BJ (cell line): ENCODE measurements at regions of chr5 and their contacts with region 1.

Region 1: DNA sequence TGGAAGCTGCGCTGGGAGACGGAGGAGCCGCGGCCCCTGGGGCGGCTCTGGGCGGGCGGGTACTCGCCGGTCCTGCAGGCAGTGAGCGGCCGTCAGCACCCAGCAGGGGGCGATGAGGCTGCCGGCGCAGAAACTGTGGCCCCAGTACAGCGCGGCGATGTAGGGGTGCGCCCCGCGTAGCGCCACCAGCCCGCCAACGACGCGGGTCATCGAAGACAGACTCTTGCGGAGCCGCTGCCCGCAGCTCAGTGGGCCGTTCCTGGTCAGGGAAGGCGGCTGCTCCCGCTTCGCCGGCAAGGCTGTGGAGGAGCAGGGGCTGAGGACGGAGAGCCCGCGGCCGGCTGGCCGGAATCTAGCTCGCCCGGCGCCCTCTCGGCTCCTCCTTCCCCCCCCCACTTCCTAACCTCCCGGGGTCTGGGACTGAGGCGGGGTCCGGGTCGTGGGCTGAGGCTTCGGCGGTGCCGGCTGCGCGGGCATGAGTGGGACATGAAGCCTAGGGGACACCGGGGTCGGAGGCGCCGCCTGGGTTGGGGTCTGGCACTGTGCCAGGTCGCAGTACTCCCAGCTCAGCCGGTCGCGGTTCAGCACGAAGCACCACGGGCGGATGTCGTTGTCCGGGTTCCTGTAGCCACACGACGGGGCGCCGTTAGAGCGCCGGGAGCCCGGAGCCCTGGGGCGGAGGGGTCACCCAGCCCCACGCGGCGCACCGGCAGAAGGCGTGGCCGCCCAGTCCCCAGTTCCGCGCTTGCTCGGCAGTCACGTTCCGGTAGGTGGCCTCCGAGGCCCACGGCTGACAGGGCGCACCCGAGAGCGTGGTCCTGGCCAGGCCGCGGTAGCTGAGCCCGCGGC is 3.6 kb upstream of the PFN3 start:
- DNase-seq: no peak
- H3K4me3 ChIP-seq: peak overlapping the region; percentile 49
- H3K27me3 ChIP-seq: peaks cover 32% of the 10 kb centered on the region
- CTCF ChIP-seq: peak; percentile 78

Region 2: GRCh38 chr5:177311723-177312648 is 92.0 kb before region 1 on chr5 and contains the start of gene MXD3:
- CTCF ChIA-PET with region 1: interaction called, 10 read pairs
- POLR2A ChIA-PET with region 1: no interaction called
- DNase-seq: peak; percentile 62
- H3K4me3 ChIP-seq: peak within 1 kb of the TSS; percentile 66
- H3K27me3 ChIP-seq: no peaks in the 10 kb centered on the region
- CTCF ChIP-seq: no peak
- polyA plus RNA-seq, gene MXD3: 11.8 and 18.1 TPM in 2 replicates

Region 3: DNA sequence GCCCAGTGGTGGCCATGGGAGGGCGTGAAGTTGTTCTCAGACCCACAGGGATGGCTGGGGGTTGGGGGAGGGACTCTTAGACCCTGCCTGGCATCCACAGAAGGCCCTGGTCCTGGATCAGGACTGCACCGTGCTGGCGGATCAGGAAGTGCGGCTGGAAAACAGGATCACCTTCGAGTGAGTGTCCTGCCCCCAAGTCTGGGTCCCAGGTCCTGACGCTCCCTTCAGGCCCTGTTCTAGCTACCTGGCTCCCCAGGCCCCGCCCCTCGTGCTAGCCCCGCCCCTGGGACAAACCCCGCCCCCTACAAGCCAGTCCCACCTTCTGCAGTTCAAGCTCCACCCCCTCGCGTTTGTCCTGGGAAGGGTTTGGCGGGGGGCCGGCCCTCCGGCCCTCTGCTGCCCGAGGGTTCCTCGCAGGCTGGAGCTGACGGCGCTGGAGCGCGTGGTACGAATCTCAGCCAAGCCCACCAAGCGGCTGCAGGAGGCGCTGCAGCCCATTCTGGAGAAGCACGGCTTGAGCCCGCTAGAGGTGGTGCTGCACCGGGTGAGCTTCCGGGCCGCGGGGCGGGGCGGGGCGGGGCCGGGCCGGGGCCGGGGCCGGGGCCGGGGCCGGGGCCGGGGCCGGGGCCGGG is 33.4 kb before region 1 on chr5:
- CTCF ChIA-PET with region 1: interaction called, 14 read pairs
- POLR2A ChIA-PET with region 1: no interaction called
- DNase-seq: peak; percentile 35
- H3K4me3 ChIP-seq: peak overlapping the region; percentile 49
- H3K27me3 ChIP-seq: no peaks in the 10 kb centered on the region; the same call in none of the 2 replicates
- CTCF ChIP-seq: peak; percentile 68

Region 4: DNA sequence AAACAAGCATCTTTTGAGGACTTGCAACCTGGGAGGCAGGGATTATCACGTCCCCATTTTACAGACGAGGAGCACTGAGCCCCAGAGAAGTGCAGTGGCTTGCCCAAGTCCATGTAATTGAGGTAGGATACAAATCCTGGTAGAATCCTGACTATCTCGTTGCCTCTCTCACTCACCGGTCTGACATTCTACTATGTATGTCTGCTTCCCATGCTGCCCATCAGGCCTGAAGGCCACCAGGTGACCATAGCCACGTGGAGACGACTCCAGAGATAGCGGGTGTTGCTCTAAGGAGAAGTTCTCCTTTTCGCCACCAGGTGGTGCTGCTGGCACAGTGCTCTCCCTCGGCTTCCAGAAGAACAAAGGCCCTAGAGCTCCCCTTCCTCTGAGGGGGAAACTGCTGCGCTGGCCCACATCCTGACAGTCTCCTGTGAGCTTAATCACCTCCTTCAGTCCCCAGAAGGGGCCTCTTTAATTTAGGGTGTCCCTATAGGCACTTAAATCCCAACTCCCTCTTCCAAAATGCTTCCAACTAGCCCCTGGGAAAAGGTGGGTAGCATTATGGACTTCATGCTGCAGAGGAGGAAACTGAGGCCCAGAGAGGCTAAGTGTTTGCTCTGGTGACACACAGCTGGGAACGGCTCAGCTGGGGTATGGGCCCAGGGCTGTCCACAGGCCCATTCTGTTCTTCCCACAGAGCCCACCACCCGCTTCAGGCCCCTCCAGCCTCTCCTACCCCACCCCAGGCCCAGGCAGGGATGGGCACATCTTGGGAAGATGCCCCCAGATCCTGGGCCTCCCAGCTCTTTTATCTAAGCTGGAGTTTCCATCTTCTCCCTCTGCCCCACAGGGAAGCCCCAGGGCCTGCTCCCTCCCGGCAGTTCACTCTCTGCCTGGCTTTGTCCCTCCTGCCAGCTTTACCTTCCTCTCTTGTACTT is 13.4 kb before region 1 on chr5:
- CTCF ChIA-PET with region 1: interaction called, 187 read pairs
- POLR2A ChIA-PET with region 1: interaction called, 3 read pairs
- DNase-seq: no peak
- H3K4me3 ChIP-seq: no peak overlapping the region
- H3K27me3 ChIP-seq: peaks cover 11% of the 10 kb centered on the region
- CTCF ChIP-seq: peak; percentile 95

Region 5: GRCh38 chr5:177437623-177438022 is 33.6 kb after region 1 on chr5:
- CTCF ChIA-PET with region 1: interaction called, 352 read pairs
- POLR2A ChIA-PET with region 1: no interaction called
- DNase-seq: no peak
- H3K4me3 ChIP-seq: no peak overlapping the region
- H3K27me3 ChIP-seq: no peaks in the 10 kb centered on the region
- CTCF ChIP-seq: no peak

Region 6: GRCh38 chr5:177599731-177600507 is 195.9 kb after region 1 on chr5 and contains the start of gene B4GALT7:
- CTCF ChIA-PET with region 1: interaction called, 3 read pairs
- POLR2A ChIA-PET with region 1: interaction called, 12 read pairs
- DNase-seq: no peak
- H3K4me3 ChIP-seq: peak within 1 kb of the TSS; percentile 92
- H3K27me3 ChIP-seq: no peaks in the 10 kb centered on the region
- CTCF ChIP-seq: no peak
- polyA plus RNA-seq, gene B4GALT7: 23.2 and 39.5 TPM in 2 replicates